Natural killer cell (primary cell): ENCODE measurements at regions of chr16 and their contacts with region 1.

Region 1: DNA sequence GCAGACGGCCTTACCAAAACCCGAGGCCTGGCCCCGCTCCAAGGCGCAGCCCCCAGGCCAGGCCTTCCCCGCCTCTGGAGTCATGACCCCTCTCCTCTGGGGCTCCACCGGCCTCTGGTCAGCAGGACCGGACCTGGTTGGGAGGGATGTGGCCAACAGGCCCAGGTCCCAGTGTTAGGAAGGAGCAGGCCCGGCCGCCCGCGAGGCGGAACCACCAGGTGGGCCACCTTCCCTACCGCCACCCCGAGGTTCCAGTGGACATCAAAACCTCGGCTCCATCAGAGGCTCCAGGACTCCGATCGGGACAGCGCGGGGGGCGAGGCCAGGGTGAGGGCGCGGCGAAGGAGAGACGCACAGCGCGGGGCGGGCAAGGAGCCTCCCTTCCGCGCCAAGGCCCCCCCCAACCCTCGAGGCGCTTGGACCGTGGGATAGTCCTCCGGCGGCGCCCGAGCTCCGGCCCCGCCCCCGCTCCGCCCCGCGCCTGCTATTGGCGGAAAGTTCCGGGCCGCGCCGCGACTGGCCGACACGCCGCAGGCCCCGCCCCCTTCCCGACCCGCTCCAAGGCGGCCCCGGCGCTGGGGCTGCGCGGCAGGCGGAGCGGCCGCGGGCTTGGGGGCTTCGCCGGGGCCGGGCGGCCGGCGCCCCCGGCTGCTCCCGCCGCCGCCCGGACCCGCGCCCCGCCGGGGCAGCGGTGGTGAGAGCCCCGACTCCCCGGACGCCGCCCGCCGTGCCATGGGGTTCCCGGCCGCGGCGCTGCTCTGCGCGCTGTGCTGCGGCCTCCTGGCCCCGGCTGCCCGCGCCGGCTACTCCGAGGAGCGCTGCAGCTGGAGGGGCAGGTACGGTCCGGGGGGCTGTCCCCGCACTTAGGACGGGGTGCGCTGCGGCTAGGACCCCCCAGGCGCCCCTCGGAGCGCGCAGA is at the start of gene METRN:
- DNase-seq: peak; percentile 92 to 93
- ATAC-seq: peak; percentile 92 to 94 (median 93)
- H3K4me3 ChIP-seq: peak within 1 kb of the TSS; percentile 16
- H3K4me3 Mint-ChIP-seq: peak within 1 kb of the TSS; percentile 72
- H3K27ac ChIP-seq: no peak within 1 kb of the TSS
- H3K27ac Mint-ChIP-seq: no peak within 1 kb of the TSS
- H3K4me1 ChIP-seq: peaks cover 26% of the 10 kb centered on the region
- H3K4me1 Mint-ChIP-seq: peaks cover 0 to 16% of the 10 kb centered on the region in 2 donors
- H3K27me3 ChIP-seq: peaks cover 15% of the 10 kb centered on the region
- H3K27me3 Mint-ChIP-seq: peaks cover 0 to 4% of the 10 kb centered on the region in 2 donors
- CTCF ChIP-seq: no peak
- total RNA-seq, gene METRN: 11.8 to 16.6 (median 14.3) TPM

Region 2: DNA sequence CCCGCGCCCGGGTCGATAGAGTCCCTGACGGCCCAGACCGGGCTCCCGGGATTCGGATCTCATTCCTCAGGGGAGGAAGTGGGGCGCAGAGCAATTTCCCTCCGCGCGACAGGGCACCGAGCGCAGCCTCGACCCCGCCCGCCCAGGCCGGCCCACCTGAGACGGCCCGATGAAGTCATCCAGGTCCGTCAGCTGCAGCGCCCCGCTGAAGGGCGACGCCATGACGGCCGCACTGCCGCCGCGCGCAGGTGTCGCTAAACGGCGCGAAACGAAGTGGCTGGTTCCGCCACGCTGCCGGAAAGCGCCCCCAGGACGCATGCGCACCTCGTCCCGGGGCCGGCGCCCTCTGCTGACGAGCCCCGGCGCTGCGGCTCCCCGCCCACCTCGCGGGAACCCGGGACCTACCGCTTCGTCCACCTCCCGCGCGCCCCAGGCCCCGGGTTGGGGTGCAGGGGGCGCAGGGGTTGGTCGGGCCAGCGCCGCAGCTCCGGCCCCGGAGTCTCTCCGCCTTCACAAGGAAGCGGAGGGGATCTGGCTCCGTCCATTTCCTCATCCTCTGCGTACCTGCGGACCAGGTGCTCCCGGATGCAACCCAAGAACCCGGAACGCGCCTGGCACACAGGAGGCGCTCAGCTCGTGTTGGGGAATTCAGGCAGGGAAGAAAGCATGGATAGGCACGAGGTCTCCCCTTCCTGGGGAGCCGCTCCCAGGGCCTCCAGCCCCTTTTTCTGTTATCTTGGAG is 26.1 kb after region 1 on chr16 and contains the start of gene CIAO3:
- intact Hi-C with region 1: loop called (anchors 2 kb)
- DNase-seq: peak; percentile 93 to 95
- ATAC-seq: peak; percentile 92 to 95 (median 92)
- H3K4me3 ChIP-seq: peak within 1 kb of the TSS; percentile 82
- H3K4me3 Mint-ChIP-seq: peak within 1 kb of the TSS; percentile 84
- H3K27ac ChIP-seq: peak within 1 kb of the TSS; percentile 74
- H3K27ac Mint-ChIP-seq: peak within 1 kb of the TSS; percentile 6 to 71
- H3K4me1 ChIP-seq: peaks cover 16% of the 10 kb centered on the region
- H3K4me1 Mint-ChIP-seq: no peaks in the 10 kb centered on the region
- H3K27me3 ChIP-seq: no peaks in the 10 kb centered on the region
- H3K27me3 Mint-ChIP-seq: no peaks in the 10 kb centered on the region
- CTCF ChIP-seq: peak; percentile 94
- total RNA-seq, gene CIAO3: 36.9 to 39.8 (median 37.5) TPM

Region 3: GRCh38 chr16:788394-789126 is 73.7 kb after region 1 on chr16 and contains the start of gene CHTF18:
- intact Hi-C with region 1: loop called (anchors 2 kb)
- DNase-seq: peak; percentile 95 to 96
- ATAC-seq: peak; percentile 96 to 98 (median 97)
- H3K4me3 ChIP-seq: peak within 1 kb of the TSS; percentile 84
- H3K4me3 Mint-ChIP-seq: peak within 1 kb of the TSS; percentile 86
- H3K27ac ChIP-seq: peak within 1 kb of the TSS; percentile 30
- H3K27ac Mint-ChIP-seq: peak within 1 kb of the TSS; percentile 38 to 71
- H3K4me1 ChIP-seq: peaks cover 29% of the 10 kb centered on the region
- H3K4me1 Mint-ChIP-seq: peaks cover 0 to 9% of the 10 kb centered on the region in 2 donors
- H3K27me3 ChIP-seq: no peaks in the 10 kb centered on the region
- H3K27me3 Mint-ChIP-seq: no peaks in the 10 kb centered on the region
- CTCF ChIP-seq: no peak
- total RNA-seq, gene CHTF18: 26.7 to 52.4 (median 40.5) TPM

Region 4: GRCh38 chr16:1054660-1055556 is 340.1 kb after region 1 on chr16:
- intact Hi-C with region 1: loop called (anchors 10 kb)
- DNase-seq: peak in 1 of 2 donors; percentile 49
- ATAC-seq: no peak
- H3K4me3 ChIP-seq: no peak overlapping the region
- H3K4me3 Mint-ChIP-seq: no peak overlapping the region
- H3K27ac ChIP-seq: no peak overlapping the region
- H3K27ac Mint-ChIP-seq: no peak overlapping the region
- H3K4me1 ChIP-seq: no peaks in the 10 kb centered on the region
- H3K4me1 Mint-ChIP-seq: peaks cover 0 to 5% of the 10 kb centered on the region in 2 donors
- H3K27me3 ChIP-seq: peaks cover 2% of the 10 kb centered on the region
- H3K27me3 Mint-ChIP-seq: no peaks in the 10 kb centered on the region
- CTCF ChIP-seq: peak; percentile 23